ENCODE measurements at regions of chr10 and their contacts with region 1.

Region 1: GRCh38 chr10:128116851-128117615 is 9.2 kb downstream of the MKI67 start:
- DNase-seq: no peak
- H3K4me3 Mint-ChIP-seq: no peak overlapping the region
- H3K27ac Mint-ChIP-seq: no peak overlapping the region
- H3K4me1 Mint-ChIP-seq: peaks cover 53% of the 10 kb centered on the region
- H3K27me3 Mint-ChIP-seq: no peaks in the 10 kb centered on the region

Region 2: DNA sequence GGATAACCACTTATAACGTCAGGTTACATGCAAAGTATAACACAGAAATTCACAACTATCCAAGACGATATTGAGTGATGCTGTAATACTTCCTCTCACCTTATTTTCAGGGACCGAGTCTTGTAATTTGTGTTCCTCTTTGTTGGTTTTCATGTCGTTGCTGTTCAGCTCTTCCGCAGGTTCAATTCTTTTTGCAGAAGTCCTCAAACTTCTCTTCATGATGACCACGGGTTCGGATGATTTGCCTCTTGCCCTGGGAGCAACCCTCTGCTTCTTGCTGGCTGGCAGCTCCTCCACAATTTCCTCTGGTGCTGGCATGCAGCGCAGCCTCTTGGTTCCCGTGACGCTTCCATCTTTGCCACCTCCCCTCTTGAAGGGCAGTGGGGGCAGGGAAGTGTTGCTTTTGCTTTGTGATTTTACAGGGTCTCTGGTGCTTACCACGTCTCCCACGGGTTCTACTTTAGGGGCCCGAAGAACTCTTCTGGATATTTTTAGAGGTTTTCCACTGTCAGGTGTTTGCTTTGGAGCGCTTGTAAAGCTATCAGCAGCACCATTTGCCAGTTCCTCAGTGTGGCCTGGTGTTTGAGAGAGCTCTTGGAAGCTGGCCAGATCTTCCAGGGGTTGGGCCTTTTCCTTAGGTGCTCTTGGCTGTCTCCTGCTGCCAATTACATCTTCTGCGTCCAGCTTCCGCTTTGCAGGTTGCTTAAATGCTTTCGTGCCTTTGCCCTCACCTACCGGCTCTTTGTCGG is 14.4 kb before region 1 on chr10:
- intact Hi-C with region 1: loop called (anchors 2 kb)
- DNase-seq: no peak
- H3K4me3 Mint-ChIP-seq: peak overlapping the region; percentile 15
- H3K27ac Mint-ChIP-seq: peak overlapping the region; percentile 45
- H3K4me1 Mint-ChIP-seq: peaks cover 43% of the 10 kb centered on the region
- H3K27me3 Mint-ChIP-seq: no peaks in the 10 kb centered on the region

Region 3: DNA sequence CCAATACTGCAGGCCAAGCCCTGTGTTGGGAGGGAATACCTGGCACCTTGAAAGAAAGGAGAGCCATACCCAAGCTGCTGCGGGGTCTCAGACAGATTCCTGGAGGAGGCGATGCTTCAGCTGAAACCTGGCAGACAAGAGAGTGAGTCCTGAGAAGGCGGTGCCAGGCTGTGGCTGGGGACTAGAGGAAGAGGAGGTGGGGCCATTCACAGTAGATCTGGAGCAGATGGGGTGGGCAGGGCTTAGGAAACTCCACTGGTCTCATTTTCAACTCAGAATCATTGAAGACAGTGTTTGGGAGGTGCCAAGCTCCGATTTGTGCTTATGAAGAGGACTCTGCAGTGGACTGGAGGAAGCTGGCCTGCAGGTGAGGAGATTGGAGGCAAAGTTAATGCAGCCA is 245.5 kb after region 1 on chr10:
- intact Hi-C with region 1: no loop called
- DNase-seq: no peak
- H3K4me3 Mint-ChIP-seq: no peak overlapping the region
- H3K27ac Mint-ChIP-seq: no peak overlapping the region
- H3K4me1 Mint-ChIP-seq: no peaks in the 10 kb centered on the region
- H3K27me3 Mint-ChIP-seq: peaks cover 3% of the 10 kb centered on the region

Measured in activated T-helper 1 cell treated with anti-CD3 and anti-CD28 coated beads, Interleukin-12 subunit alpha, Interleukin-12 subunit beta, Interleukin-2, Interleukin-4 antibody, amounts not matched to agents 30 ng/mL and 10 ng/mL and 1 ng/mL, durations not matched to agents 14 hours and 24 hours and 36 hours (primary cell).